ENCODE measurements at regions of chr1 and their contacts with region 1.

Region 1: GRCh38 chr1:11295905-11296304 is 22.9 kb downstream of the UBIAD1 start:
- DNase-seq: peak in 1 of 5 donors; percentile 16
- H3K4me3 ChIP-seq: no peak overlapping the region
- H3K4me3 Mint-ChIP-seq: no peak overlapping the region
- H3K27ac ChIP-seq: no peak overlapping the region
- H3K27ac Mint-ChIP-seq: peak overlapping the region in 2 of 8 donors; percentile 45 to 61
- H3K4me1 ChIP-seq: peaks cover 25% of the 10 kb centered on the region
- H3K4me1 Mint-ChIP-seq: peaks cover 13 to 30% (median 18%) of the 10 kb centered on the region in 3 donors
- H3K27me3 ChIP-seq: no peaks in the 10 kb centered on the region
- H3K27me3 Mint-ChIP-seq: no peaks in the 10 kb centered on the region

Region 2: DNA sequence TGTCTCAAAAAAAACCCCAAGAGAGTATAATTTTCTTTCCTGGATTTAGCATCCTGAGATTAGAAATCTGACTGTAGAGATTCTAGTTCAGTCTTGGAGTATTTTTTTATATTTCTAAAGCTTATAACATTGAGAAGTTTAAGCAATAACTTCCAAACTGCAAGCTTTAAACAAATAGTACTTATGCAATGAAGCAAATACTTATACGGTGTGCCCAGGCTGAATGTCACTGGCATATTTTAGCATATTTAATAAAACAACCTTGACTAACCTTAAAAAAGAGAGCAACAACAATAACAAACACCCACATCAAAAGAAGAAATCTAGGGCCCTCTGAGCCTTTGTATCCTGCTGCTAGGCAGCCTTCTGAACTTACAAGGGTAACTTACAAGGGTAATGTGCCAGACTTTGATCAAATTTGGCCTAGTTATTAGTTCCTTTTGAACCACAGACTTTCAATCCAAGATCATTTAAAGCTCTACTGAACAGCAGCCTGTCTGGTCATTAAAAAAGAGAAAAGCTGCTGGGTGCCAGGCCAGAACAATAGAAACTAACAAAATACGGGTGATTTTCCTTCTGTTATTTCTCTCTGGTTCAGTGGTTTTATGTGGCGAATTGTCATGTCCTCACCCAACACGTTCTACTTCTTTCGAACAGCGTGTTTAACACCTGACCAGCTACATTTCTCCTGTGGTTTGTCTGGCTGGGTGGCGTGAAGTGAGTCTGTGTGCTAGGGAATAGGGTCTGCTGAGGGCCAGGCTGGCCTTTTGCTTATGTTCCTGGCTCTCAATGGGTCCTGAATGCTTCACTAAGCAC is 49.8 kb before region 1 on chr1:
- CTCF ChIA-PET with region 1: interaction called, 12 read pairs
- POLR2A ChIA-PET with region 1: no interaction called
- DNase-seq: peak in 1 of 5 donors; percentile 57
- H3K4me3 ChIP-seq: no peak overlapping the region
- H3K4me3 Mint-ChIP-seq: peak overlapping the region in 5 of 7 donors; percentile 18 to 79 (median 38)
- H3K27ac ChIP-seq: peak overlapping the region; percentile 3
- H3K27ac Mint-ChIP-seq: peak overlapping the region; percentile 77 to 100 (median 94)
- H3K4me1 ChIP-seq: no peaks in the 10 kb centered on the region
- H3K4me1 Mint-ChIP-seq: peaks cover 29 to 37% (median 33%) of the 10 kb centered on the region in 3 donors
- H3K27me3 ChIP-seq: no peaks in the 10 kb centered on the region
- H3K27me3 Mint-ChIP-seq: no peaks in the 10 kb centered on the region